ENCODE measurements at regions of chr2 and their contacts with region 1.

Region 1: DNA sequence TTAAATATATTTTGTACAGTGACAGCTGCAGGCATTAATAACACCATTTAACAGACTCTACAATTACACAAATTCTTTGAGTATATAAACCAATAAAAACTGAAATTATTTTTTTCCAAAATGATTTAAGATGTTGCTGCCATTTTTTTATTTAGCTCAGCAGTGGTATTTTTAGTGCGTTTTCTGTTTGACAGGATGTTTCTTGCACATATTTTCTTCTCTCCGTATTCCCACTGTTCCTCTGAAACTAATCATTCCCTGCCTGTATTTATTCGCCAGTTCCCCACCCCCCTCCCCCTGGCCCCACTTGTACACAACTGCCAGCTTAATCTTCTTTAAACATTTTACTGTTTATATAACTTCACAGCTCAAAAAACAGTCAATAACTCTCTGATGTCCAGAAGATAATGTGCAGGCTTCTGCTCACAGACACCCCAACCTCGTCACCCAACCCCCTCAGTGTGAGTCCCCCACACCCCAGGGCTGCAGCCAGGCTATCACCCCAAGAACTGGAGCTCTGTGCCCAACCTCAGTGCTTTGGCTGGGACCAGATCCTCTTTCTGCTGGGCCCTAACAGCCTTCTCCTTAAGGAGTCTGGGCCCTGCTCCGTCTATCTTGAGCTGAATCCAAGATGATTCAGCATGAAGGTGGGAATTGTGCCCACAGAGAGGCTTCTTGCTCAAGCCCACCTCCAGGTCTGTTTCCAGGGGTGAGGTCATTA is 41.6 kb upstream of the MAP4K4 start:
- DNase-seq: no peak
- H3K4me3 ChIP-seq: no peak overlapping the region
- H3K27ac ChIP-seq: no peak overlapping the region
- H3K4me1 ChIP-seq: no peaks in the 10 kb centered on the region
- H3K27me3 ChIP-seq: no peaks in the 10 kb centered on the region
- CTCF ChIP-seq: no peak
- POLR2A ChIP-seq: no peak

Region 2: DNA sequence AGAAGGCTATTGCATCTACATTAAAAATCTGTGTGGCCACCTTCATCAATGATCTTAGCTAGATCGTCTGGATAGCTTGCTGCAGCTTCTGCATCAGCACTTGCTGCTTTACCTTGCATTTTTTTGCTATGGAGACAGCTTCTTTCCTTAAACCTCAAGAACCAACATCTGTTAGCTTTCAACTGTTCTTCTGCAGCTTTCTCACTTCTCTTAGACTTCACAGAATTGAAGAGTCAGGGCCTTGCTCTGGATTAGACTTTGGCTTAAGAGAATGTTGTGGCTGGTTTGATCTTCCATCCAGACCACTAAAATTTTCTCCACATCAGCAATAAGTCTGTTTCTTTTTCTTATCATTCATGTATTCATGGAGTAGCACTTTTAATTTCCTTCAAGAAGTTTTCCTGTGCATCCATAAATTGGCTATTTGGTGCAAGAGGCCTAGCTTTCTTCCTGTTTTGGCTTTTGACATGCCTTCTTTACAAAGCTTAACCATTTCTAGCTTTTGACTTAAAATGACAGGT is 12.8 kb before region 1 on chr2:
- CTCF ChIA-PET with region 1: interaction called, 10 read pairs
- POLR2A ChIA-PET with region 1: no interaction called
- dilution Hi-C with region 1: no loop called
- intact Hi-C with region 1: no loop called
- DNase-seq: no peak
- H3K4me3 ChIP-seq: no peak overlapping the region
- H3K27ac ChIP-seq: no peak overlapping the region
- H3K4me1 ChIP-seq: no peaks in the 10 kb centered on the region
- H3K27me3 ChIP-seq: no peaks in the 10 kb centered on the region
- CTCF ChIP-seq: no peak
- POLR2A ChIP-seq: no peak